Stomach (tissue), 19 donors: ENCODE measurements at regions of chr3 and their contacts with region 1.

Region 1: GRCh38 chr3:166013073-166013679 is 176.0 kb upstream of the BCHE start:
- DNase-seq: peak in 1 of 2 donors; percentile 64
- H3K4me3 ChIP-seq: no peak overlapping the region
- H3K27ac ChIP-seq: no peak overlapping the region
- H3K4me1 ChIP-seq: no peaks in the 10 kb centered on the region
- H3K27me3 ChIP-seq: no peaks in the 10 kb centered on the region
- CTCF ChIP-seq: peak in 1 of 7 experiments; percentile 12
- EP300 ChIP-seq: no peak
- POLR2A ChIP-seq: no peak

Region 2: DNA sequence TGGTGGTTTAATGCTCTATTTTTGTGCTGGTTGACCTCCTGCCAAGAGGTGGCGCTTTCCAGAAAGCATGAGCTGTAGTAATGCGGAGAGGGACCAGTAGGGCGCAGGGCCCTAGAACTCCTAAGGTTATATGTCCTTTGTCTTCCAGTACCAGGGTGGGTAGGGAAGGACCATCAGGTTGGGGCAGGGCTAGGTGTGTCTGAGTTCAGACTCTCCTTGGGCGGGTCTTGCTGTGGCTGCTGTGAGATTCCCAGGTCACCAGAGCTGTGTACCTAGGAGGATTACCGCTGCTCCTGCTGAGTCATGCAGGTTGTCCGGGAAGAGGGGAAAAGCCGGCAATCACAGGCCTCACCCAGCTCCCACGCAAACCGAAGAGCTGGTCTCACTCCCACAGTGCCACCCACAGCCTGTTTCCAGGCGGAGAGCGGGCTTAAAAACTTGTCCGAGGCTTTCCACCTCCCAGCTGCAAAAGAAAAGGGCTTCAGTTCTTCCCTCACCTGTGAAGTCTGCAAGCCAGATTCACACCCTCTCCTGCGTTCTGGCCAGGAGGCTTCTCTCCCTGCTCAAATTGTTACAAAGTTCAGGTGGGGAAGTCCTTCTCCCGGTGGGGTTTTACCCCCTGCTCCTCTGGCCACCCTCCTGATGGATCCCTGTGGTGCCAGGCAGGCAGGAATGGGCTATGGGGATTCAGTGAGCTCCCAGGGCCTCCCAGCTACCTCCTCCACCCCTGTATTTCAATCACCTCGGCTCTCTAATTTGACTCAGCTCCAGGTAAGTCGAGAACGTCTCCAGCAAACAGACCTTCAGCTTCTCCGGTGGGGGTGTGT is 138.3 kb before region 1 on chr3:
- intact Hi-C with region 1: no loop called
- DNase-seq: no peak
- H3K4me3 ChIP-seq: no peak overlapping the region
- H3K27ac ChIP-seq: no peak overlapping the region
- H3K4me1 ChIP-seq: no peaks in the 10 kb centered on the region
- H3K27me3 ChIP-seq: no peaks in the 10 kb centered on the region
- CTCF ChIP-seq: no peak
- EP300 ChIP-seq: no peak
- POLR2A ChIP-seq: no peak

Region 3: GRCh38 chr3:165954178-165954577 is 59.0 kb before region 1 on chr3:
- intact Hi-C with region 1: no loop called
- DNase-seq: no peak
- H3K4me3 ChIP-seq: no peak overlapping the region
- H3K27ac ChIP-seq: no peak overlapping the region
- H3K4me1 ChIP-seq: no peaks in the 10 kb centered on the region
- H3K27me3 ChIP-seq: no peaks in the 10 kb centered on the region
- CTCF ChIP-seq: no peak
- EP300 ChIP-seq: no peak
- POLR2A ChIP-seq: no peak

Region 4: GRCh38 chr3:167032261-167032876 is 1019.2 kb after region 1 on chr3:
- intact Hi-C with region 1: loop called (anchors 10 kb)
- DNase-seq: peak in 1 of 2 donors; percentile 82
- H3K4me3 ChIP-seq: no peak overlapping the region
- H3K27ac ChIP-seq: no peak overlapping the region
- H3K4me1 ChIP-seq: peaks cover 0 to 4% (median 0%) of the 10 kb centered on the region in 4 donors
- H3K27me3 ChIP-seq: no peaks in the 10 kb centered on the region
- CTCF ChIP-seq: peak in 2 of 7 experiments; percentile 24 to 51
- EP300 ChIP-seq: no peak
- POLR2A ChIP-seq: no peak

Region 5: DNA sequence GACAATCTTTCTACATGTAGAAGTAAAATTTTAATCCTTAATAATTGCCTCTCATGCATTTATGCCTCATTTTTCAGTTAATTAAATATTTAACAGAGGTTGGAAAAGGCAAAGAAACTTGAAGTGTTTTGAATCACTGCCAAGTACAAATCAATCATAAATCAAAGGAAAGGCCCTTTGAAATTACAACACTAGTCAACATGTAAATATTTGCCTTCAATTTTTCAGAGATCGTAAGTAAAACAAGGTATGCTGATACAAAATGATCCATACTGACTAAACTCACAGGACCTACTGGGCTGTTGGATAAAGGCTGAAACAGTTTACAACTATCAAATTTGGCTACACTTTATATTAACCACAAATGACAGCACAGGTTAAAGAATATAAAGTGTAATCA is 1333.0 kb after region 1 on chr3:
- intact Hi-C with region 1: loop called (anchors 5 kb)
- DNase-seq: peak in 1 of 2 donors; percentile 3
- H3K4me3 ChIP-seq: no peak overlapping the region
- H3K27ac ChIP-seq: no peak overlapping the region
- H3K4me1 ChIP-seq: no peaks in the 10 kb centered on the region
- H3K27me3 ChIP-seq: no peaks in the 10 kb centered on the region
- CTCF ChIP-seq: no peak
- EP300 ChIP-seq: no peak
- POLR2A ChIP-seq: no peak